Activated B cell treated with CpG ODN at 0.5 μM for 24 hours (primary cell): ENCODE measurements at regions of chr10 and their contacts with region 1.

Region 1: GRCh38 chr10:93702211-93703001 is at the start of gene FRA10AC1:
- DNase-seq: peak; percentile 87
- ATAC-seq: peak; percentile 88
- H3K4me3 Mint-ChIP-seq: no peak within 1 kb of the TSS
- H3K27ac Mint-ChIP-seq: no peak within 1 kb of the TSS
- H3K4me1 Mint-ChIP-seq: peaks cover 11% of the 10 kb centered on the region
- H3K27me3 Mint-ChIP-seq: no peaks in the 10 kb centered on the region
- CTCF ChIP-seq: no peak
- total RNA-seq, gene FRA10AC1: 20.3 and 24.8 TPM in 2 replicates

Region 2: GRCh38 chr10:92848441-92849233 is 853.8 kb before region 1 on chr10 and contains the start of gene EXOC6:
- CTCF ChIA-PET with region 1: no interaction called
- POLR2A ChIA-PET with region 1: no interaction called
- intact Hi-C with region 1: loop called (anchors 5 kb)
- DNase-seq: peak; percentile 89
- ATAC-seq: peak; percentile 84
- H3K4me3 Mint-ChIP-seq: peak within 1 kb of the TSS; percentile 87
- H3K27ac Mint-ChIP-seq: peak within 1 kb of the TSS; percentile 87
- H3K4me1 Mint-ChIP-seq: peaks cover 34% of the 10 kb centered on the region
- H3K27me3 Mint-ChIP-seq: no peaks in the 10 kb centered on the region
- CTCF ChIP-seq: no peak
- total RNA-seq, gene EXOC6: 15.3 and 17.3 TPM in 2 replicates

Region 3: DNA sequence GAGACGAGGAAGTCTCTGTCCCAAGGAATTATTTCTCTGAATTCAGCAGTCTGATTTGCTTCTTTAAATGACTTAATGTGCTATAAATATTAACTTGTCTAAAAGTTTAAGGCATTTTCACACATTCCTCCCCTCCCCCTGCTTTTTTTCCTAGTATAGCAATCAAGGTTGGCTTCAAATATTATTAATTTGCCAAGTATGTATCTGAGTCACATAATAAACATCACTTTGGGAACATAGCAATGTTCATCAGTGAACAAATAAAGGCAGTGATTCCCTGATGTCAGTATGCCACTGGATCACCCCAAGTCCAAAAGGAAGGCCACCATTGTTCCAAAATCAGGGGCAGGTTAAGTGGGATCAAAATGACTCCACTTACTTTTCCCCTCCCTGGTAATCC is 49.5 kb before region 1 on chr10:
- CTCF ChIA-PET with region 1: no interaction called
- POLR2A ChIA-PET with region 1: no interaction called
- intact Hi-C with region 1: no loop called
- DNase-seq: no peak
- ATAC-seq: no peak
- H3K4me3 Mint-ChIP-seq: no peak overlapping the region
- H3K27ac Mint-ChIP-seq: no peak overlapping the region
- H3K4me1 Mint-ChIP-seq: no peaks in the 10 kb centered on the region
- H3K27me3 Mint-ChIP-seq: no peaks in the 10 kb centered on the region
- CTCF ChIP-seq: no peak

Region 4: GRCh38 chr10:93742633-93743349 is 40.4 kb after region 1 on chr10:
- CTCF ChIA-PET with region 1: interaction called, 3 read pairs
- POLR2A ChIA-PET with region 1: interaction called, 8 read pairs
- intact Hi-C with region 1: loop called (anchors 2 kb)
- DNase-seq: no peak
- ATAC-seq: peak; percentile 99
- H3K4me3 Mint-ChIP-seq: peak overlapping the region; percentile 44
- H3K27ac Mint-ChIP-seq: peak overlapping the region; percentile 65
- H3K4me1 Mint-ChIP-seq: peaks cover 18% of the 10 kb centered on the region
- H3K27me3 Mint-ChIP-seq: peaks cover 5% of the 10 kb centered on the region
- CTCF ChIP-seq: no peak

Region 5: DNA sequence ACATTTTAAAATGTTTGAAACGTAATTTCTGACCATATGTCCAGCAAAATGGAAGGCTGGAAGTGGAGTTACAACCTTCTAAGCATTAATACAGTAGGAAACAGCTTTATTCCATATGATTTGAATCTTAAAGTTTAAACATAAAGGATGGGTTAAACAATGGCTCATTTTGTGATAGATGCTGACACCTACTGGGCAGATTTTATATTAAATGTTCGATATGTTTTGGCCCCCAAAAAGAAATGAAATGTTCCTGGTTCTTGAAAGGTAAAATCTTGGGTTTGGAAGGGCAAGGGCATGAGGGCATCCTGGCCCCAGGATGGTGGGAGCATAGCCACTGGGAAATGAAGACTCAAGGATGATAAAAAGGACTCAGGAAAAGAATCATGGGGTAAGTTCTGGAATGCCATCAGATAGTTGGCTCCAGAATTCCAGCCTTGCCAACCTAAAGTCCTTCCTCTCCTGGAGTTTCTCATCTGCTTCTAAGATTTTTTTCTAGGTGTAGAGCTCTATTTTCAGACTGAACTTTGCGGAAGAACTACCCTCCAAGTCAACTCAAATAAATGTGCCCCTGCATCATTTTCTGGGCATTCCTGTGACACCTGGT is 156.7 kb after region 1 on chr10:
- CTCF ChIA-PET with region 1: interaction called, 3 read pairs
- POLR2A ChIA-PET with region 1: no interaction called
- intact Hi-C with region 1: loop called (anchors 1 kb)
- DNase-seq: no peak
- ATAC-seq: no peak
- H3K4me3 Mint-ChIP-seq: no peak overlapping the region
- H3K27ac Mint-ChIP-seq: no peak overlapping the region
- H3K4me1 Mint-ChIP-seq: no peaks in the 10 kb centered on the region
- H3K27me3 Mint-ChIP-seq: peaks cover 5% of the 10 kb centered on the region
- CTCF ChIP-seq: no peak

Region 6: DNA sequence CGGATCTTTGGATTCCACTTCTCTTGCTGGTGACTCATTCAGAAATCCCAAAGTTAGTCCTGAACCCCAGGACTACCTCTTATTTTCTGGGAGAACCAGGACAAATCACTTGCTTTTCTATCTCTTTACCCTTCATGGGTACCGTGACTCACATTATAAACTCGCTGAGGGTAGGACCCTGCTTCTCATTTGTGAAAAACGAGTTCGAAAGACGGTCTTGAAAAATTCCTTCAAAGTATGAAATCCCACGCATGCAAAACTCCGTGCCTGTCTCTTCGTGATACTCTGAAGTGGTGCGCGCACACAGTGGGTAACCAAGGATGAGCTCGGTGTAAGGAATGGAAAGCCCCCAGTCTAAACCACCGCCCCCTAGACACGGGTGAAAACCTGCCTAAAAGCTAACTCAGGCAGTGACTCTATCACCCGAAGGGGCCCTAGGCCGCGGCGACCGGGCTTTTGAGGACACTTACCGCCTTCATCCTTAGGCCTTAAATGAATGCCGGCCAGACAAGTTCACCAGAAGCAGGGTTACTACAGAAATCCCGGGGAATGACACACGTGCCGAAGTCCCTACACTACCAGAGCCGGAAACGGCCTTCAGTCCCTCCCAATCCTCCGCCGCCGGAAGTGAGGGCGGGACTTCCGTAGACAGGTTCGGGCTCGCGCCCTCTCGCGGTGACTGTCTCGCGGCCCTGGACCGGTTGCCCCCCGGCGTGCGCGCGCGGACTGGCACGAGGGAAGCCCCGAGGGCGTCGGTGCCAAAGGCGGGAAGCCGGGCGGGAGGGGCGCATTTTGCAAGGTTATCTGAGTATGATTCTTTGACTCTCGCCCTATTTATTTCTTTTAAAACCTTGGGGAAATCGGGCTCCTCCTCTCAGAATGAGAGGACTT is 660.2 kb after region 1 on chr10 and contains the start of gene NOC3L:
- CTCF ChIA-PET with region 1: no interaction called
- POLR2A ChIA-PET with region 1: interaction called, 4 read pairs
- intact Hi-C with region 1: loop called (anchors 1 kb)
- DNase-seq: peak; percentile 96
- ATAC-seq: peak; percentile 93
- H3K4me3 Mint-ChIP-seq: peak within 1 kb of the TSS; percentile 98
- H3K27ac Mint-ChIP-seq: peak within 1 kb of the TSS; percentile 99
- H3K4me1 Mint-ChIP-seq: peaks cover 43% of the 10 kb centered on the region
- H3K27me3 Mint-ChIP-seq: peaks cover 12% of the 10 kb centered on the region
- CTCF ChIP-seq: peak; percentile 34
- total RNA-seq, gene NOC3L: 46.7 and 50.8 TPM in 2 replicates